GM13977 (cell line): ENCODE measurements at regions of chr16 and their contacts with region 1.

Region 1: DNA sequence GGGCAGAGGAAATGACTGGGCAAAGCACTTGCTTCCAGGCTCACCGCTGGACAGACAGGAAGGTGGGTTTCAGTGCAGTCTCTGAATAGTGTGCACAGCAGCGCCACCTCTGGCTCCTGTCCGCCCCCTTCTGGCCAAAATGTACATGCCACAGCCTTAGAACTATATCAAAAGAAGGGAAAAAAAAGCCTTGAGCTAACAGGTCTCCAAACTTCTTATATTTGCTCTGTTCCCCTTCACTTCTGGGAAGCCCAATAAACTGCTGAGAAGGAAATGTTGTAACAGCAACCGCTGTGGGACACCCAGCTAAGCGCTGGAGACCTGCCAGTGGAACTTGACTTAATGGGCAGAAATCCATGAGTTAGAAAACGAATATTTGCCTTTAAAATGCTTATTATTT is 17.5 kb downstream of the COG7 start:
- DNase-seq: peak; percentile 63
- CTCF ChIP-seq: peak; percentile 88

Region 2: DNA sequence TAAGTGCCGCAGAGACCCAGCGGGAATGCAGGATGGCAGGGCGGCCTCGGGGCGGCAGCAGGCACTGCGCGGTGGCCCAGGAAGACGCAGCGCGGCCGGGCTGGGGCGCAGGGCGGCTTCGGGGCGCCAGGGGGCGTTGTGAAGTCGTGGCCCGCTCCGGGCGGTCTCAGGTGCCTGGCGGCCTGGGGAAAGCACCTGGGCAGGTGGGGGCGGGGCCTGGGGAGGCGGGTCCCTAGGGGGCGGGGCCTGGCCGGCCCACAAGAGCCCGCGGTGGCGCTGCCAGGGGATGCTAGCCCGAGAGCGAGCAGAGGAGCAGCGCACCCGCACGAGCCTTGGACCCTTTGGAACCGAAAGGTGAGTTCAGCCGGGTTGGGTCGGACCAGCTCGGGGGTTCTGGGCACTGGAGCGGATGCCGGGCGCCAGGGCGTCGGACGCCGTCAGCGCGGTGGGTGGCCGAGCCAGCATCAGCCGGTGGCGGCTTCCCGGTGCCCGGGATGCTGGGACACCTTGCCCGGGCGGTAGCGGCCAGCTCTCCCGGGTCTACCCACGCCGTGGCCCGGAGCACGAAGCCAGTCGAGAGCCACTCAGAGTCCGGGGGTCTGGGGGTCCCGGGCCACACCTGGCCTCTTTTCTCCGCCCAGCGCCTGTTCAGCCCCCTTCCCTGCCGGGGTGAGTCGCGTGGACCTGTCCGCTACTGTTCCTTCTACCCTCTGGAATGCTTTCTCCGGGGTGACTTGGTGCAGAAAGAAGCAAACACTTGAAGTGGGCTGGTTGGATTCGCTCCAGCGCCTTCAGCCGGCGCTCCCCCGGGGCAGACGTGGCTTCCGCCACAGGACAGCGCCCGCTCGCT is 252.8 kb before region 1 on chr16 and contains the start of gene SCNN1G:
- in situ Hi-C with region 1: loop called (anchors 10 kb)
- DNase-seq: peak; percentile 95
- CTCF ChIP-seq: peak; percentile 100

Region 3: GRCh38 chr16:23496826-23497542 is 61.5 kb after region 1 on chr16:
- in situ Hi-C with region 1: no loop called
- DNase-seq: no peak
- CTCF ChIP-seq: no peak